Cardiac septum (tissue), 1 donor: ENCODE measurements at regions of chr1 and their contacts with region 1.

Region 1: DNA sequence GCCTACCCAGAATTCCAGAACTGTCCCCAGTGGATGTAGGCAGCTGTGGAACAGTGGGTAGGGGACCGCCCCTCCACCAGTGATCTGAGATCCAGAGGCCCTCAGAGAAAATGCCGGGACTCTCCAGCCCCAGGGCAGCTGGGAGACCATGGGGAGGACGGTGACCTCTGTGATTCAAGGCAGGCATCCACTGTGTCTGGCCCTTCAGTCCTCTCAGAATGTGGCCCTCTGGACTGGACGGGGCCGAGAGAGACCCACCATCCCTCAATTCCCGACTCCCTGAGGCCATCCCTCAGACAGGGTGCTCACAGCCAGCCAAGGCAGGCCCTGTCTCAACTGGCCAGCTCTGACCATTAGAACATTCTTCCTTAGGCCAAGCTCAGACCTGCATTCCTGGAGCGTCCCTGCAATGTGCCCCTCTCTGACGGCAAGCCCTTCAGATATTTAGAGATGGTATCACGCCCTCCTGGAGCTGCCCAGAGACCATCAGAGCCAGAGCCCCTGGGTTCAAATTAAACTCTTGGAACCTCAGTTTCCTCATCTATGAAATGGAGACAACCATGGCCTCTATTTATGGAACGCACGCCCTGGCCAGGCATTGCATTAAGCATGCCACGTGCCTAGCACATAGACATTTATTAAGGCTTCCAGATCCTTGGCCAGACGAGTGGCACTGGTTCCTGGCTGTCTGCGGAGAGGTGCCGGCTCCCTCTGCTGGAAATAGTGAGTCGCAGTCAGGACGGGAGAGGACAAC is 9.6 kb upstream of the EPS8L3 start:
- DNase-seq: peak; percentile 91

Region 2: GRCh38 chr1:109548321-109549267 is 224.7 kb before region 1 on chr1 and contains the start of gene GNAI3:
- intact Hi-C with region 1: loop called (anchors 1 kb)
- DNase-seq: peak; percentile 99
- total RNA-seq, gene GNAI3: 3.9 TPM

Region 3: GRCh38 chr1:109643385-109644230 is 129.7 kb before region 1 on chr1:
- intact Hi-C with region 1: loop called (anchors 1 kb)
- DNase-seq: peak; percentile 93

Region 4: DNA sequence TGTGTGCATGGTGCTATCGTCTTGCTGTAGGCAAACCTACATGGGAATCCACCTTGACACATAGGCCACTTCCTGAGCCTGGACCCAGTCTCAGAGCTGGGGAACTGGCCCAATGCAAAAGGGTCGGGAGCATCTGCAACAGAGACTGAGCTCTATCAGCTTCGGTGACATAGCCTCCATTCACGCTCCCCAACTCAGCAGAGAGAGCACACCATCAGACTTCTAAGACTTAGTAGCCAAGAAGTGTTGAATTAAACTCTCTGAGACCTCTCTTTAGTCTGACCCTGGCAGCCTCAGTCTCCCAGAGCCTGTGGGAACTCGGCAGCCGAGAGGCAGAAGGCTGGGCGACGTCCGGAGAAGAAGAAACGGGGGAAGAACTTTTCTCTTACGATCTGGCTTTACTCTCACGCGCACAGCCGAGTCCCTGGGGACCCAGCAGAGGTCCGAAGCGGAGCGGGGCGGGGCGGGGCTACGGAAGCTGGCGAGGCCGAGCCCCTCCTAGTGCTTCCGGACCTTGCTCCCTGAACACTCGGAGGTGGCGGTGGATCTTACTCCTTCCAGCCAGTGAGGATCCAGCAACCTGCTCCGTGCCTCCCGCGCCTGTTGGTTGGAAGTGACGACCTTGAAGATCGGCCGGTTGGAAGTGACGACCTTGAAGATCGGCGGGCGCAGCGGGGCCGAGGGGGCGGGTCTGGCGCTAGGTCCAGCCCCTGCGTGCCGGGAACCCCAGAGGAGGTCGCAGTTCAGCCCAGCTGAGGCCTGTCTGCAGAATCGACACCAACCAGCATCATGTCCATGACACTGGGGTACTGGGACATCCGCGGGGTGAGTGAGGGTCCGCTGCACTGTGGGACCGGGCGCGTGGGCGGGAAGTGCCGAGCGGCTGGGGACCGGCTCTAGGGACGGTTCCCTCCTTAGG is 117.5 kb before region 1 on chr1 and contains the start of gene GSTM4:
- intact Hi-C with region 1: loop called (anchors 5 kb)
- DNase-seq: peak; percentile 93
- total RNA-seq, gene GSTM4: 33.0 TPM

Region 5: GRCh38 chr1:109716121-109716520 is 57.2 kb before region 1 on chr1:
- intact Hi-C with region 1: loop called (anchors 2 kb)
- DNase-seq: no peak

Region 6: GRCh38 chr1:109910123-109910962 is 137.0 kb after region 1 on chr1 and contains the start of gene CSF1:
- intact Hi-C with region 1: loop called (anchors 5 kb)
- DNase-seq: peak; percentile 89
- total RNA-seq, gene CSF1: 16.7 TPM